OCI-LY7 (cell line): ENCODE measurements at regions of chr18 and their contacts with region 1.

Region 1: DNA sequence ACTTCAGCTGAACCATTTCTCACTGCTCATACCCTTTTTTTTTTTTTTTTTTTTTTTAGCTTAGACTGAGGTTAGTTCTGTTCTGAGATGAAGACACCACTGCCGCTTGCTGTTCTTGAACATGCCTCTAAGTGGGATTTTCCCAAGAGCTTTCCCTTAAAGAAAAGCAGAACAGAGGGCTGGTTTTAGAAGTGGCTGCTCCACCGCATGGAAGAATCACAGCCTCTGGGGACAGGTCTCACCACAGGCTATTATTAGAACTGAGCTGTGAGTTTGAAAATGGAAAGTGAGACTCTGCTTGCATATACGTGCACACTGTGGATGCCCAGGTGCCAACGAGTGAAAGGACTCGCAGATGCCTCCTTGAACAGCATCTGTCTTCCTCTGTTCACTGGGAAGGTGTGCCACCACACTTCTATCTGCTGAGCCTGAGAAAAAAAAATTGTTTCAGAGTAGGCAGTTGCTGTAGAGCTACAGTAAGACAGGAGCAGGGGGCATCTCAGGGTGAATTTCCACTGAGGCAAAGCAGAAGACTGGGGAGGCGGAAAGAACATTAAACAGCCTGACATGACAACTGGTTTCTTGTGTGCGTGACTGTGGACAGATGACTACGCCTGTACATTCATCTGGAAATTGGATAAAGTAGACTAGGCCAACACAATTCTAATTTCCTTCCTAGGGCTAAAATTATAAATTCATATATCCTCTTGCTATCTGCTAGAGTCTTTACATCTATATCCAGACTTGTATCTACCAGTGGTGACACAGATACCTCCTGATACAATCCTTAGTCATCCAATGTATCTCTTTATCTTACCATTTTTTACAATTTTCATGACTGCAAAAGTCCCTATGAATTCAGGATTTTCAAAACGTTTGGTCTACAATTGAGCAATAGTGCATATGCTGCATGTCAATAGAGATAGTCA is 1045.7 kb upstream of the CELF4 start:
- DNase-seq: no peak
- H3K4me3 ChIP-seq: no peak overlapping the region
- H3K27ac ChIP-seq: no peak overlapping the region
- H3K4me1 ChIP-seq: no peaks in the 10 kb centered on the region
- CTCF ChIP-seq: no peak

Region 2: DNA sequence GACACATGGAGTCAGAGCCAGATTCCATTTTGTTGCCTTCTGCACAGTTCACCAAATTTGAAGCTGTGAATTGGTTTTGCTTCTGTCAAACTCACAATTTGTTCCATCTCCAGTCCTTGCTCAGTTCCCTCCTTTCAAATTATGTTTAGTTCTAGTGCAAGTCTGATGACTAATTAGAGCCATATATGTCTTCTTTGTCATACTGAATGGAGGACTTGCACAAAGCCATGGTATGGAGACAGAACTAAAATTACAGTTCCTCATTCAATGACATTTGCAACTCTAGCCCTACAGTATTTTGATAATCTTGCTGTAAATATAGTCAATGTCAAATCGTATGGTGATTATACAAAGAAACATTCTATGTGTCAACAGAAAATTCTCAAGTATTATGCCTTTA is 108.8 kb before region 1 on chr18:
- CTCF ChIA-PET with region 1: no interaction called
- POLR2A ChIA-PET with region 1: no interaction called
- intact Hi-C with region 1: loop called (anchors 5 kb)
- DNase-seq: no peak
- H3K4me3 ChIP-seq: no peak overlapping the region
- H3K27ac ChIP-seq: no peak overlapping the region
- H3K4me1 ChIP-seq: no peaks in the 10 kb centered on the region
- CTCF ChIP-seq: no peak